ENCODE measurements at regions of chr17 and their contacts with region 1.

Region 1: DNA sequence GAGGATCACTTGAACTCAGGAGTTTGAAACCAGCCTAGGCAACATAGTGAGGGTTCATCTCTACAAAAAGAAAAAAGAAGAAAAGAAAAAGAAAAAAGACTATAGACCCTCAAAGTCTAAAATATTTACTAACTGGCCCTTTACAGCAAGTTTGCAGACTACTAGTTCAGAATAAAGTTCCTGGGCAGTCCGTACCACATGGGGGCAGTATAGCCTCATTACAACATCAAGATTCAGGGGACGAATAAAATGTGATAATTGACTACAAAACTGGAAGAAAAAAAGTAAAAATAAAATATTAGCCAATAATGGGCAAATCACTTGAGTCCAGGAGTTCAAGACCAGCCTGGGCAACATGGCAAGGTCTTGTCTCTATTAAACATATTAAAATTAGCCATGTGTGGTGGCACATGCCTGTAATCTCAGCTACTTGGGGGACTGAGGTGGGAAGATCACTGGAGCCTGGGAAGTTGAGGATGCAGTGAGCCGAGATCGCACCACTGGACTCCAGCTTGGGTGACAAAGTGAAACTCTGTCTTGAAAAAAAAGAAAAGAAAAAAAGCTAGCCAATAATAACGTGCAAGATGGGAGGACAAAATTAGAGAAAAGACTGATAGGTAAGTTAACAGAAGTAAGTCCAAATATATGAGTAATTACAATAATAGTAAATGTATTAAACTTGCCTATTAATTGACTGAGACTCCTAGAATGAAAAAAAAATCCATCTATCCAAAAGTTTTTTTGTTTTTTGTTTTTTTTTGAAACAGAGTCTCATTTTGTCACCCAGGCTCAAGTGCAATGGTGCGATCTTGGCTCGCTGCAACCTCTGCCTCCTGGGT is 129.4 kb upstream of the SEC14L1 start:
- DNase-seq: peak in 1 of 2 experiments; percentile 86
- H3K4me3 ChIP-seq: no peak overlapping the region
- H3K27ac ChIP-seq: no peak overlapping the region
- H3K4me1 ChIP-seq: no peaks in the 10 kb centered on the region
- H3K27me3 ChIP-seq: 0 out of 7 replicates have a peak, but pooled peaks cover 0 to 2% (median 0%) of the 10 kb centered on the region in 4 experiments
- CTCF ChIP-seq: peak in 2 of 3 experiments; percentile 71 to 73; a peak in 3 of 4 replicates
- EP300 ChIP-seq: no peak
- POLR2A ChIP-seq: no peak
- RAD21 ChIP-seq: peak; percentile 84 to 89

Region 2: DNA sequence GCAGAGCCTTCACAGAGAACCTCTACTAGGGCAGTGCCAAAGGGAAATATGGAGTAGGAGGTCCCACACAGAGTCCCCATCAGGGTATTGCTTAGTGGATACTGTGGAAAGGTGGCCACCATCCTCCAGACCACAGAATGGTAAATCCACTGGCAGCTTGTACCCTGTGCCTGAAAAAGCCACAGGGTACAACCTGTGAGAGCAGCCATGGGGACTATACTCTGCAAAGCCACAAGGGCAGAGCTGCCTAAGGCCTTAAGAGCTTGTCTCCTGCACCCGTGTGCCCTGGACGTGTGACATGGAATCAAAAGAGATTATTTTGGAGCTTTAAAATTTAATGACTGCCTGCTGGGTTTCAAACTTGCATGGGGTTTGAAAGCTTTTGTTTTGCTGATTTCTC is 11.4 kb after region 1 on chr17:
- CTCF ChIA-PET with region 1: interaction called, 14 read pairs
- POLR2A ChIA-PET with region 1: no interaction called
- DNase-seq: no peak
- H3K4me3 ChIP-seq: no peak overlapping the region
- H3K27ac ChIP-seq: no peak overlapping the region
- H3K4me1 ChIP-seq: peaks cover 0 to 4% (median under 1%) of the 10 kb centered on the region in 4 experiments; a peak in 2 of 7 replicates
- H3K27me3 ChIP-seq: no peaks in the 10 kb centered on the region; a peak in 1 of 7 replicates
- CTCF ChIP-seq: no peak
- EP300 ChIP-seq: no peak
- POLR2A ChIP-seq: no peak
- RAD21 ChIP-seq: no peak

Measured in H1 (cell line).